Gastrocnemius medialis (tissue), 4 donors: ENCODE measurements at regions of chr12 and their contacts with region 1.

Region 1: DNA sequence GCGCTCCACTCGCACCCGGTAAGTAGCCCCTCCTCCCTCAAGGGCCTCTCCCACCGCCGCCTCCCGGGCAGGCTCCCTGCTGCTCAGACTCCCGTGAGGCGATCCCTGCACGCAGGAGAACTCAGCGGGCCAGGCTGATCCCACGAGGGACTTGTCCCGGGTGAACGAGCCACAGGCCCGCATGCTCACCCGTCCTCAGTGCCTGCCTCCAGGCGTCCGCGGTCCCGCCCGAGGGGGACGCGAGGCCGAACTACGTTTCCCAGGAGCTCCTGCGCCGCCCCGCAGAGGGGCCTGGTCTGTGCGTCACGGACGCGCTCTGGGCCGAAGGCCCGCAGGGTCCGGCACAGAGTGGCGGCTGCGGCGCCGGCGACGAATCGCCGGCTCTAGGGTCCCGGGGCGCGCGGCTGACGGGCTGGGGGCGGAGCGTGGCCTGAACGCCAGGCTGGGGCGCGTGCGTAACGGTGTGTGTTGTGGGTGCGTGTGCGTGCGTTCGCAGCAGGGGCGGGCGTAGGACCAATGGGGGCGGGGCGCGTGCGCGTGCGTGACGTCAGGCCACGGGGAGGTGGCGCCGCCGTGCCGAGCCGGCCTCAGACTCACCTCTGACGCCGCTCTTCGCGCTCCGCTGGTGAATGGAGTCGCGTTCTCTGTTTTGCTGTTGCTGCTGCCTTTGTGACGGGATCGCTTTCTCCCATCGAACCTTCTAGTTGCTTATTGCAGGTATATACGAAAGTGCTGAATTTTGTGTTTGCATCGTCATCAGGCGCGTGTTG is at the starts of genes ZNF10 and ZNF891:
- DNase-seq: peak; percentile 90 to 94
- ATAC-seq: peak; percentile 96 to 97
- H3K4me3 ChIP-seq: peak within 1 kb of the TSS; percentile 74 to 98 (median 91)
- H3K27ac ChIP-seq: peak within 1 kb of the TSS; percentile 88 to 98 (median 95)
- H3K4me1 ChIP-seq: peaks cover 9 to 10% of the 10 kb centered on the region in 2 donors
- H3K27me3 ChIP-seq: no peaks in the 10 kb centered on the region
- CTCF ChIP-seq: peak in 2 of 5 experiments; percentile 8 to 22
- POLR2A ChIP-seq: peak; percentile 74 to 88
- total RNA-seq, gene ZNF10: 3.0 to 8.3 (median 4.3) TPM
- total RNA-seq, gene ZNF891: 0.19 to 1.5 (median 0.51) TPM

Region 2: DNA sequence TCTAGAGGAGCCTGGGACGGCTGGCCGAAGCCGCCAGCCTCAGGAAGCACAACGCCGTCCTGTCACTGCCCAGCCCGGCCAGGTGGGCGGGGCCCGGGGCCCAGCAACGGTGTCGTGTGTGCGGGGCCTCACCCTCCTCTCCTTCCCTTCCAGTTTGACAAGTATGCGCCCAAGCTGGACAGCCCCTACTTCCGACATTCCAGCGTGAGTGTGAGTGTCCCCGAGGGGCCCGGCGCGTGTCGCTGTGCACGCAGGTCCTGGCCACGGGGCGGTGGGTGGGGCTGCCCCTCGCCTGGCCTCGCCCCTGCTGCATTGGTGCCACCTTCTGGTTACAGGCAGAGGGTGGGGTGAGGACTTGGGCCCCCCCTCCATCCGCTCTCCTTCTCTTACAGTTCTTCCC is 558.1 kb before region 1 on chr12:
- in situ Hi-C with region 1: no loop called
- intact Hi-C with region 1: no loop called
- DNase-seq: no peak
- ATAC-seq: no peak
- H3K4me3 ChIP-seq: no peak overlapping the region
- H3K27ac ChIP-seq: no peak overlapping the region
- H3K4me1 ChIP-seq: no peaks in the 10 kb centered on the region
- H3K27me3 ChIP-seq: no peaks in the 10 kb centered on the region
- CTCF ChIP-seq: no peak
- POLR2A ChIP-seq: no peak

Region 3: GRCh38 chr12:132761032-132761920 is 368.9 kb before region 1 on chr12 and contains the start of gene ANKLE2:
- in situ Hi-C with region 1: no loop called
- intact Hi-C with region 1: loop called (anchors 2 kb)
- DNase-seq: peak in 1 of 2 donors; percentile 28
- ATAC-seq: peak; percentile 73 to 80
- H3K4me3 ChIP-seq: peak within 1 kb of the TSS; percentile 86 to 98 (median 90)
- H3K27ac ChIP-seq: peak within 1 kb of the TSS; percentile 94 to 100 (median 99)
- H3K4me1 ChIP-seq: peaks cover 21 to 32% of the 10 kb centered on the region in 2 donors
- H3K27me3 ChIP-seq: no peaks in the 10 kb centered on the region
- CTCF ChIP-seq: no peak
- POLR2A ChIP-seq: peak in 1 of 2 donors; percentile 2
- total RNA-seq, gene ANKLE2: 29.6 to 44.9 (median 34.6) TPM

Region 4: GRCh38 chr12:132887513-132888351 is 242.5 kb before region 1 on chr12 and contains the start of gene CHFR:
- in situ Hi-C with region 1: no loop called
- intact Hi-C with region 1: loop called (anchors 2 kb)
- DNase-seq: peak; percentile 84 to 91
- ATAC-seq: peak; percentile 97
- H3K4me3 ChIP-seq: peak within 1 kb of the TSS; percentile 73 to 91 (median 84)
- H3K27ac ChIP-seq: peak within 1 kb of the TSS; percentile 85 to 93 (median 91)
- H3K4me1 ChIP-seq: peaks cover 4 to 7% of the 10 kb centered on the region in 2 donors
- H3K27me3 ChIP-seq: no peaks in the 10 kb centered on the region
- CTCF ChIP-seq: no peak
- POLR2A ChIP-seq: peak; percentile 44 to 54
- total RNA-seq, gene CHFR: 10.8 to 19.6 (median 12.1) TPM

Region 5: DNA sequence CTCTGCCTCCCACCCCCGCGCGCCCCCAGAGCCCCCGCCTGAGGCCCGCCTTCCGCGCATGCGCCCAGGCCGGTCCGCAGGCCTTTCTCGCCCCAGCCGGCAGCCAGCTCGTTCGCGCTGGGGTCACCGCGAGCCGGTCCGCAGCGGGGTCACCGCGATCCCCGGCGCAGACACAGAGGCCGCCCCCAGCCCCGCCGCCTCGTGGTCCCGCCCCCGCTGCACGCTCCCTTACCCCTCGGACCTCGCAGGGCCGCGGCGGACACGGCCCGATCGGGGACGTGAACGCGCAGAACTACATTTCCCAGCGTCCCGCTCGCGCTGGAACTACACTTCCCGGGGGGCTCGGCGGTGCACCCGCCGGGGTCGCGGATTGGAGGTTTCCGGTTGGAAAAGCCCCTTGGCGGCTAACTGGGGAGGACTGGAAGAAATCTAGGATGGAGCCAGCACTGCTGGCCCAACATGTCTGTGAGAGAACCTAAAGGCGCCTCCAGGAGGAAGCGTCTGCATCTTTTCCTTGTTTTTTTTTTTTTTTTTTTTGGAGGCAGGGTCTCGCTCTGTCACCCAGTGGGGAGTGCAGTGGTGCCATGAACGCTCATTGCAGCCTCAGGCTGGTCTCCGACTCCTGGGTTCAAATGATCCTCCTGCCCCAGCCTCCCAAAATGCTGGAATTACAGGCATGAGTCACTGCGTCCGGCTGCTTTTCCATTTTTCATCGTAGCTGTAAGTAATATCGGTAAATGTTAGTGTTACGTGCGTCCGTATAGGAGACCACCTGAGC is 174.0 kb before region 1 on chr12 and contains the start of gene ZNF605:
- in situ Hi-C with region 1: no loop called
- intact Hi-C with region 1: loop called (anchors 2 kb)
- DNase-seq: peak; percentile 70 to 78
- ATAC-seq: peak; percentile 94 to 97
- H3K4me3 ChIP-seq: peak within 1 kb of the TSS; percentile 85 to 99 (median 88)
- H3K27ac ChIP-seq: peak within 1 kb of the TSS; percentile 82 to 96 (median 94)
- H3K4me1 ChIP-seq: peaks cover 9 to 20% of the 10 kb centered on the region in 2 donors
- H3K27me3 ChIP-seq: no peaks in the 10 kb centered on the region
- CTCF ChIP-seq: no peak
- POLR2A ChIP-seq: peak in 1 of 2 donors; percentile 30
- total RNA-seq, gene ZNF605: 2.1 to 4.6 (median 2.2) TPM

Region 6: DNA sequence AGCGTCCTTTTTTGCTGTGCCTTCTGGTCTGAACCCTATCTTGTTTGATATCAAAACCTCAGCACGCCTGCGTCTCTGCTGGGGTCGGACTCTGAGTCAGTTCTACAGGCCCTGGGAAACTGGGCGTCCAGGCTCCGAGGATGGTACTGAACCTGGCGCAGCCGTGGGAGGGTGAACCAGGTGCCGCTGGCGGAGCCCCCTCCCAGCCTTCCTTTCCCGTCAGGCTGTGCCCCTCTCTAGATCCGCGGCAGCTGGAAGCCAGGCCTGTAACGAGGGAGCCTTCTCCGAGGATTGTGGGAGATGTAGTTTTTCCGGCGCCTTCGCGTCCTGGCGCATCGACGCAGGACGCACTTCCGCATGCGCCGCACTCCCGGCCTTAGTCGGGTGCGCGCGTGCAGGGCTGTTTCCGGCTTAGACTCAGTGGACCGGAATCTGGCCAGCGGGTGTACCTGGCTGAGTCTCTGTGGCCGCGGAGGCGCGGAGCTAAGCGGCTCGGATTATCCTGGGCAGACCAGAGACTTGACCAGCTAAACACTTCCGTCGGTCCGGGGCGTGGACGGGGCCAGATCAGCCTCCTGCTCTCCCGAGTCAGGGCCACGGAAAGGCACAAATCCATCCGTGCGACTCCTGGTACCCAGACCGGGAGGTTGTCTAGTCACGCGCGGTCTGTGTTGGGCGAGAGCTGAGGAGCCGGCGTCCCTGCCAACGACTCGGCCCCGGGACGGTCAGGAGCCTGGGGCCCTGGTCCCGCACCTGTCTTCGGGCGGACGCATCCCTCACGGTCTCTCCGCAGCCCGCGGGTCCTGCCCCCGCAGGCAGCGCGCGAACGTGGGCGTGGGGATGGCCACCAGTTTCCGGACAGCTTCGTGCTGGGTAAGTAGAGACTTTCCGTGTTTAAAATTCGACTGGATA is 144.0 kb before region 1 on chr12 and contains the start of gene ZNF26:
- in situ Hi-C with region 1: no loop called
- intact Hi-C with region 1: loop called (anchors 1 kb)
- DNase-seq: peak; percentile 81 to 86
- ATAC-seq: peak; percentile 99 to 100
- H3K4me3 ChIP-seq: peak within 1 kb of the TSS; percentile 77 to 98 (median 88)
- H3K27ac ChIP-seq: peak within 1 kb of the TSS; percentile 86 to 88 (median 87)
- H3K4me1 ChIP-seq: peaks cover 12 to 13% of the 10 kb centered on the region in 2 donors
- H3K27me3 ChIP-seq: no peaks in the 10 kb centered on the region
- CTCF ChIP-seq: no peak
- POLR2A ChIP-seq: peak; percentile 30 to 50
- total RNA-seq, gene ZNF26: 1.2 to 12.3 (median 2.6) TPM

Region 7: DNA sequence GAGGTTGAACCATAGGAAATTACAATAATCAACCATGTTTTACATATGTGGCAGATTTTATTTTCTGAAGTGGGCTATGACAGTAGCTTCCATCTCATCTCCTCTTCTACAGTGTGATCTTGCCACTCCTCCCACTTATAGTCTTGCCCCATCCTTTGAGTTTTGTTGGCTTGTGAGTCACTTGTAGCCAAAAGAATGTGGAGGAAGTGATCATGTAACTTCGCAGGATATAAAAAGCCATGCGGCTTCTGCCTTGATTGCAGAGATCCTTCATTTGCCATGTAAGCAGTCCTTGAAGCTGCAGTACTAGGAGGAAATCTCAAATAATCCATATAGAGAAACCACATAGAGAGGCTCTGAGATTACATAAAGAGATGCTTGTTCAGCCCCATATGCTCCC is 106.7 kb before region 1 on chr12:
- in situ Hi-C with region 1: no loop called
- intact Hi-C with region 1: no loop called
- DNase-seq: no peak
- ATAC-seq: no peak
- H3K4me3 ChIP-seq: no peak overlapping the region
- H3K27ac ChIP-seq: no peak overlapping the region
- H3K4me1 ChIP-seq: no peaks in the 10 kb centered on the region
- H3K27me3 ChIP-seq: no peaks in the 10 kb centered on the region
- CTCF ChIP-seq: no peak
- POLR2A ChIP-seq: no peak

Region 8: DNA sequence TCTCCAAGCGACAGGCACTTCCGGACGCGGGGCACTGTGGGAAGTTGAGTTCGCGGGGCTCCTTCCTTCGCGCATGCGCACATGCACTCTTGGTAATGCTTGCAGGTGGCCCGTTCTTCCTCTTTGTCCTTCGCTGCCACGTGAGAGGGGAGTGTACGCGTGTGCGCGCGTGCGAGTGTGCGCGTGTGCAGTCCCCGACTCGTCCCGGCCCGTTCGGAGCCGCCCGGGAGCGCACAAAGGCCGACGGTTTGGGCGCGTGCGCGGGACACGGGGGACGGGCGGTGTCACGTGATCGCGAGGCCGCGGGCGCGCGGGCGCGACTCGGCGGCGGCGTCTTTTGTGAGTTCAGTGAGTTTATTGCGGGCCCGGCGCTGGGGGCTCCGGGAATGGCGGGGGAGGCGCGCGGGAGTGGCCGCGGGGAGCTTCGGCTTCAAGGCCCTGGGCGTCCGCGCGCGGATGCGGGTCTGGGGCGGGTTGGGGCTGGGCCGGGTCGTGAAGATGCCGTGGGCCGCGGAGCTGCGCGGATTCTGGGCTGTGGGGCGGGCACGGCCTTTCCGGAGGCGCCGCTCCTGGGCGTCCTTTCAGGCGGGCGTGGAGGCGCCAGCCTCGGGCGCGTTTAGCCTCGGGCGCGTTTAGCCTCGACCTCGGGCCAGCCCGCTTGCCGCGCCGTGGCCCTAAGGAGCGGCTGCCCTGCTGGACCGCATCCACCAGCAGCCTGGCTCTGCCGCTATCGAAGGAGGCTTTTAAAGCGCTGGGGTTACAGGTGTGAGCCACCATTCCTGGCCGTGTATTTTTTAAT is 92.8 kb before region 1 on chr12 and contains the start of gene ZNF84:
- in situ Hi-C with region 1: no loop called
- intact Hi-C with region 1: loop called (anchors 1 kb)
- DNase-seq: peak; percentile 93 to 94
- ATAC-seq: peak; percentile 96 to 99
- H3K4me3 ChIP-seq: peak within 1 kb of the TSS; percentile 74 to 90 (median 80)
- H3K27ac ChIP-seq: peak within 1 kb of the TSS; percentile 83 to 97 (median 91)
- H3K4me1 ChIP-seq: peaks cover 11 to 12% of the 10 kb centered on the region in 2 donors
- H3K27me3 ChIP-seq: no peaks in the 10 kb centered on the region
- CTCF ChIP-seq: peak in 2 of 5 experiments; percentile 23 to 47
- POLR2A ChIP-seq: peak; percentile 60 to 61
- total RNA-seq, gene ZNF84: 5.3 to 20.9 (median 13.5) TPM

Region 9: GRCh38 chr12:133073836-133074235 is 56.4 kb before region 1 on chr12:
- in situ Hi-C with region 1: no loop called
- intact Hi-C with region 1: no loop called
- DNase-seq: no peak
- ATAC-seq: no peak
- H3K4me3 ChIP-seq: no peak overlapping the region
- H3K27ac ChIP-seq: no peak overlapping the region
- H3K4me1 ChIP-seq: no peaks in the 10 kb centered on the region
- H3K27me3 ChIP-seq: no peaks in the 10 kb centered on the region
- CTCF ChIP-seq: no peak
- POLR2A ChIP-seq: no peak

Region 10: GRCh38 chr12:133181238-133181959 is 51.2 kb after region 1 on chr12 and contains the start of gene ZNF268:
- in situ Hi-C with region 1: no loop called
- intact Hi-C with region 1: loop called (anchors 1 kb)
- DNase-seq: peak; percentile 68 to 83
- ATAC-seq: peak; percentile 90 to 100
- H3K4me3 ChIP-seq: peak within 1 kb of the TSS; percentile 65 to 91 (median 84)
- H3K27ac ChIP-seq: peak within 1 kb of the TSS; percentile 44 to 76 (median 62)
- H3K4me1 ChIP-seq: peaks cover 7 to 9% of the 10 kb centered on the region in 2 donors
- H3K27me3 ChIP-seq: no peaks in the 10 kb centered on the region
- CTCF ChIP-seq: peak; percentile 40 to 76 (median 75)
- POLR2A ChIP-seq: no peak
- total RNA-seq, gene ZNF268: 3.8 to 8.9 (median 4.3) TPM

Region 11: GRCh38 chr12:133256321-133256720 is 126.1 kb after region 1 on chr12:
- in situ Hi-C with region 1: no loop called
- intact Hi-C with region 1: no loop called
- DNase-seq: no peak
- ATAC-seq: no peak
- H3K4me3 ChIP-seq: no peak overlapping the region
- H3K27ac ChIP-seq: no peak overlapping the region
- H3K4me1 ChIP-seq: no peaks in the 10 kb centered on the region
- H3K27me3 ChIP-seq: no peaks in the 10 kb centered on the region
- CTCF ChIP-seq: no peak
- POLR2A ChIP-seq: no peak